Activated T-helper 1 cell treated with anti-CD3 and anti-CD28 coated beads, Interleukin-12 subunit alpha, Interleukin-12 subunit beta, Interleukin-2, Interleukin-4 antibody, amounts not matched to agents 30 ng/mL and 10 ng/mL and 1 ng/mL, durations not matched to agents 14 hours and 24 hours and 36 hours (primary cell): ENCODE measurements at regions of chr1 and their contacts with region 1.

Region 1: DNA sequence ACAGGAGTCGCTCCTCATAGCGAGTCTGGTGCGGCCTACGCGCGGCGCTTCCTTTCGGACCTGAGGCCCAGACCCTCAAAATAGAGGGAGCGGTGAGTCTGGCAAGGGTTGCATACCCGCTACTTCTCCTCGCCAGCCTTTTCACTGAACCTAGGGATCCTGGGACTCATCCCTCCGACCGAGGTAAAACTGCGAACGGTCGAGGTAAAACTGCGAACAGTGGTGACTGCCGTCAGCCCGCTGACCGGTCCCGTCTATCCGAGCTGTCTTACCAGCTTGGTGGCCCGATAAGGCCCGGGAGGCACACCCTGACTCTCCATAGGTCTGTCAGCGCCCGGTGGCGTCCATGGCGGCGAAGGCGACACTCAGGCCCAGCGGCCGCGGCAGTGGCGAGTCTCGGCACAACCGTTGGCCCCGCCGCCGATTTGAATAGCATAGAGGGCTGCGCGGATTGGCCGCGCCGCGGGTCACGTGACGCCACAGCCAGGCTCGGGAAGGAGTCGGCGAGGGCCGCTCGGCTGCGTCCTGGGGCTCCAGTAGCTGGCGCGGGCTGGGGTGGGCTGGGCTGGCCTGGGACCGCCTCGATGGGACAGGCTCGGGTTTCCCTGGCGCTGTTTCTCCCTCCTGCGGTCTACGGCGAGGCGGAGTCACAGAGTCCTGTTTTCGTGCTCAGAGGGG is at the start of gene DEPDC1:
- DNase-seq: peak; percentile 84
- H3K4me3 Mint-ChIP-seq: peak within 1 kb of the TSS; percentile 92
- H3K27ac Mint-ChIP-seq: peak within 1 kb of the TSS; percentile 81
- H3K4me1 Mint-ChIP-seq: peaks cover 27% of the 10 kb centered on the region
- H3K27me3 Mint-ChIP-seq: peaks cover 17% of the 10 kb centered on the region
- total RNA-seq, gene DEPDC1: 10.0 and 11.3 TPM in 2 replicates

Region 2: GRCh38 chr1:66924756-66925557 is 1571.9 kb before region 1 on chr1 and contains the starts of genes DNAI4 and MIER1:
- intact Hi-C with region 1: loop called (anchors 5 kb)
- DNase-seq: peak; percentile 98
- H3K4me3 Mint-ChIP-seq: peak within 1 kb of the TSS; percentile 93
- H3K27ac Mint-ChIP-seq: peak within 1 kb of the TSS; percentile 97
- H3K4me1 Mint-ChIP-seq: peaks cover 66% of the 10 kb centered on the region
- H3K27me3 Mint-ChIP-seq: no peaks in the 10 kb centered on the region
- total RNA-seq, gene DNAI4: 1.2 and 3.2 TPM in 2 replicates
- total RNA-seq, gene MIER1: 53.2 and 57.4 TPM in 2 replicates

Region 3: GRCh38 chr1:68481041-68481440 is 15.8 kb before region 1 on chr1:
- intact Hi-C with region 1: loop called (anchors 2 kb)
- DNase-seq: no peak
- H3K4me3 Mint-ChIP-seq: no peak overlapping the region
- H3K27ac Mint-ChIP-seq: no peak overlapping the region
- H3K4me1 Mint-ChIP-seq: peaks cover under 1% of the 10 kb centered on the region
- H3K27me3 Mint-ChIP-seq: no peaks in the 10 kb centered on the region

Region 4: GRCh38 chr1:68558321-68559026 is 61.7 kb after region 1 on chr1:
- intact Hi-C with region 1: no loop called
- DNase-seq: no peak
- H3K4me3 Mint-ChIP-seq: no peak overlapping the region
- H3K27ac Mint-ChIP-seq: no peak overlapping the region
- H3K4me1 Mint-ChIP-seq: no peaks in the 10 kb centered on the region
- H3K27me3 Mint-ChIP-seq: peaks cover 2% of the 10 kb centered on the region